Heart left ventricle (tissue), 16 donors: ENCODE measurements at regions of chrX and their contacts with region 1.

Region 1: DNA sequence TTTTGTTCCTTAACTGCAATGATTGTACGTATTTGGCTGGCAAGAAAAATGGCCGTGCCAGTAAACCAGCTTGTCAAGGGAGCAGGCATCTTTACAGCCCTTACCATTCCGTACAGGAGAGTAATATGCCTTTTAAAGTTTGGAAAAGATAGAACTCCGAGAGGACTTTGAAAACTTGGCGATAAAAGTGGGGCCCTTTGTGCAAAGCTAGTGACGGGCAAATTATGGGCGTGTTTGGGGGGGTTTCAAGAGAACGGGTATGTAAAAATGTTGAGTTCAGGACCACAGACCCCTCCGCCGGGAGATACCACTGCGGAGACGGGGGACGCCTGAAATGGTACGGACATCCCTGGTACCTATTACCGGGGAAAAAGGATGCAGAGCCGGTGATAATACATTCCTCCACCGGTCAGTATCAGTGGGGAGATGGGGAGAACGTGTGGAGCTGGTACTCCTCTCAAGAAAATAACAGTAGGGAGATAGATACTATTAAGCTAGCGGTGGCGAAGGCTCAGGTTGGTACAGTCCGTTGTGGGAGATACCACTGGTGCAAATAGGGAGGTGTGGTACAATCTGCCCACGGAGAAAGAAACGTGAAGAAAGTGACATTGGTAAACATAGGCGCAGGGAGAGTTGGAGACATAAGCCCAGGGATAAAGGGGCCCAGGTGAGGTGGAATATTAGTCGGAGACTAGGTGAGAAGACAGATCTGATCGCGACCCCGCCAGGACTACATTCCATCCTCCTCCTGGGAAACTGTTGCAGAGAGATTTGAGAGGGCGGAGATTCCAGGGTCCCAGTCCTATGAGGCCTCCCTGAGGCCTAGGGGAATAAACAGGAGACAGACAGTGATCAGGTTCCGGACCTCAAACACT is 14.5 kb downstream of the SPACA5 start:
- DNase-seq: peak; percentile 74 to 85 (median 78)
- ATAC-seq: peak; percentile 81 to 89 (median 88)
- H3K4me3 ChIP-seq: peak overlapping the region; percentile 3 to 88 (median 59)
- H3K27ac ChIP-seq: peak overlapping the region; percentile 78 to 99 (median 88)
- H3K4me1 ChIP-seq: peaks cover 0 to 9% (median 1%) of the 10 kb centered on the region in 12 donors
- H3K27me3 ChIP-seq: no peaks in the 10 kb centered on the region
- CTCF ChIP-seq: no peak
- POLR2A ChIP-seq: no peak

Region 2: DNA sequence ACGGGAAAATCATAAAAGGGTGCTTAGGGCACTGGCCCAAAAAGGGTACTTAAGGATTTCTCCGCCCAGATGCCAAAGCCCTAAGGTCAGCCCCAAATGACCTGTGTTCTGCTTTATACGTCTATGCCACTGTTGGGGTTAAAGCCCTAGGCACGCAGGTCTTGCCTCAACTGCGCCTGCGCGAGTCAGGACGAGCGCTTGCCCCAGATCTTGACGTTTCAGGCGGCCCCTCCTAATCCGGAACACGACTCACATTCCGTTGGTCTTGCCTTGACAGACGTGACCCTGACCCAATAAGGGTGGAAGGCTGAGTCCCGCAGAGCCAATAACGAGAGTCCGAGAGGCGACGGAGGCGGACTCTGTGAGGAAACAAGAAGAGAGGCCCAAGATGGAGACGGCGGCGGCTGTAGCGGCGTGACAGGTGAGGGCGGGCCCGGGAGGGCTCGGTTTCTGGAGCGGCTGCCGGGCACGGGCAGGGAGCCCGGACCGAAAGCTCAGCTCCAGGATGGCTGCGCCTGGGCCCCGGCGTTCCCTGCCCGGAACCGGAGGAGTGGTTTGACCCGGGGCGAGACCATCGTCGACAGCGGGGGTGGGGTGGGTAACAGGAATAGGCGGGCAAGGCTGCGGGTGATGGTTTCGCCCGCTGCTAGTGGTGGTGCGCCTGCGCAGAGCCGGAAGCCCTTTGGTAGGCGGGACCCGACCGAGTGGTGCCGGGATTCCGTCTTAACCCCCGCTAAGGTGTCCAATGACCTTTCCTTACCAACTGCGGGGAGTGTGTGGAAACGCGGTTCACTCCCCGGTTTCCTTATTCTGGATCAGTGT is 460.2 kb before region 1 on chrX and contains the start of gene ARAF:
- intact Hi-C with region 1: loop called in 5 of 10 experiments (anchors 5 to 10 kb)
- DNase-seq: peak; percentile 97 to 98 (median 97)
- ATAC-seq: peak; percentile 91 to 95 (median 94)
- H3K4me3 ChIP-seq: peak within 1 kb of the TSS; percentile 28 to 95 (median 68)
- H3K27ac ChIP-seq: peak within 1 kb of the TSS; percentile 91 to 100 (median 97)
- H3K4me1 ChIP-seq: peaks cover 0 to 32% (median 7%) of the 10 kb centered on the region in 12 donors
- H3K27me3 ChIP-seq: no peaks in the 10 kb centered on the region
- CTCF ChIP-seq: no peak
- POLR2A ChIP-seq: peak in 1 of 2 donors; percentile 54
- total RNA-seq, gene ARAF: 68.3 to 97.6 (median 85.1) TPM

Region 3: GRCh38 chrX:47650164-47651042 is 370.9 kb before region 1 on chrX and contains the start of gene ELK1:
- intact Hi-C with region 1: loop called in 5 of 10 experiments (anchors 5 to 10 kb)
- DNase-seq: peak; percentile 93 to 97 (median 95)
- ATAC-seq: peak; percentile 94 to 98 (median 97)
- H3K4me3 ChIP-seq: peak within 1 kb of the TSS; percentile 39 to 90 (median 70)
- H3K27ac ChIP-seq: peak within 1 kb of the TSS; percentile 47 to 93 (median 82)
- H3K4me1 ChIP-seq: peaks cover 0 to 17% (median 6%) of the 10 kb centered on the region in 12 donors
- H3K27me3 ChIP-seq: peaks cover 0 to 4% (median 0%) of the 10 kb centered on the region in 9 donors
- CTCF ChIP-seq: peak in 2 of 12 donors; percentile 18 to 30
- POLR2A ChIP-seq: peak in 1 of 2 donors; percentile 39
- total RNA-seq, gene ELK1: 23.7 to 35.3 (median 29.7) TPM

Region 4: DNA sequence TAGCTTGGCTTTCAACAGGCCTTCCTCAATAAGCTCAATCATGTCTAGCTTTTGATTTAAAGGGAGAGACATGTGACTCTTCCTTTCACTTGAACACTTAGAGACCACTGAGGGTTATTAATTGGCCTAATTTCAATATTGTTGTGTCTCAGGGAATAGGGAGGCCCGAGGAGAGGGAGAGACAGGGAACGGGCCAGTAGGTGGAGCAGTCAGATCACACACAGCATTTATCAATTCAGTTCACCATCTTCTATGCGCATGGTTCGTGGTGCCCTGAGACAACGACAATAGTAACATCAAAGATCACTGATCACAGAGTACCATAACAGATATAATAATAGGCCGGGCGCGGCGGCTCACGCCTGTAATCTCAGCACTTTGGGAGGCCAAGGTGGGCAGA is 166.8 kb before region 1 on chrX:
- intact Hi-C with region 1: loop called in 7 of 10 experiments (anchors 2 to 5 kb)
- DNase-seq: peak in 3 of 5 donors; percentile 6 to 33 (median 16)
- ATAC-seq: peak in 2 of 4 donors; percentile 57 to 58
- H3K4me3 ChIP-seq: no peak overlapping the region
- H3K27ac ChIP-seq: no peak overlapping the region
- H3K4me1 ChIP-seq: no peaks in the 10 kb centered on the region
- H3K27me3 ChIP-seq: peaks cover 0 to 5% (median 0%) of the 10 kb centered on the region in 9 donors
- CTCF ChIP-seq: peak in 10 of 12 donors; percentile 13 to 51 (median 37)
- POLR2A ChIP-seq: no peak